Activated CD4-positive, alpha-beta T cell treated with anti-CD3 and anti-CD28 coated beads, Interleukin-2, amount 10 ng/mL, durations not matched to agents 24 days and 14 days (primary cell): ENCODE measurements at regions of chr19 and their contacts with region 1.

Region 1: DNA sequence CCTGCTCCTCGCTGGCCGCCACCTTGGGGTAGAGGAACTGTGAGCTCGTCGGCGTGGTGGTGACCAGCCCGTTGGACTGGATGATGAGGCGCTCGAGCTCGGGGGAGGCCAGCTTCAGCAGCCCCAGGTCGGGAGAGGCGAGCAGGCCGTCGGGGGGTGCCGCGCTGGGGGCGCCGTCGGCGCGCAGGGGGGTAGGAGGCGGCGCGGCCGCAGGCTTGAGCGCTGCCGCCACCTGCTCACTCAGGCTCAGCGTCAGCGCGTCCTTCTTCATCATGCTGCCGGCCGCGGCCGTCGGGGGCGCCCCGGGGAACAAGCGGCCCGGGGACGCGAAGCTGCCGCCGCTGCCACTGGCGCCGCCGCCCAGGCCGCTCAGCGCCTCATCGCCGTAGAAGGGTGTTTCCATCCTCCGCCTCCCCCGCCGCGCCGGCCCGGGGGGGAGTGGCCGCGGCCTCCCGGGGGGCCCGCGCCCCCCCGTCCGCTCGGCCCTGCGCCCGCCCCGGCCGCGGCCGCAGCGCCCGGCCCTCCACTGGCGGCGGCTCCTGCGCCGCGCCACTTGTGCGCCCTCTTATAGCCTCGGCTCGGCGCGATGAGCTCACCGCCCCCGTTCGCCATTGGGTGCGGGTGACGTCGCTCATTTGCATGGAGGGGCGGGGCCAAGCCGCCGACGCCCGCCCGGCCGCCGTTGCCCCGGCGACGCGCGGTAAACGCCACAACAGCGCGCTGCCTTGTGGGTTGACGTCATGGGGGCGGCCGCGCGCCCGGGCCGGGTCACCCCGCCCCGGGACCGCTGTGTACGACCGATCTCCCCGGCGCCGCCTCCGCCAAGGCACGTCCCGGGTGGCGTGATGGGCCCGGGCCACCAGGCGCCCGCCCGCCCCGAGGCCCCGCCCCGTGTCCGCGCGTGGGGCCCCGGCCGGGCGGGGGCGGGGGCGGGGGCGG is at the start of gene JUND:
- DNase-seq: peak; percentile 99
- H3K4me3 Mint-ChIP-seq: peak within 1 kb of the TSS; percentile 99
- H3K27ac Mint-ChIP-seq: peak within 1 kb of the TSS; percentile 98
- H3K4me1 Mint-ChIP-seq: peaks cover 46% of the 10 kb centered on the region
- H3K27me3 Mint-ChIP-seq: peaks cover 1% of the 10 kb centered on the region
- total RNA-seq, gene JUND: 382 and 413 TPM in 2 replicates

Region 2: DNA sequence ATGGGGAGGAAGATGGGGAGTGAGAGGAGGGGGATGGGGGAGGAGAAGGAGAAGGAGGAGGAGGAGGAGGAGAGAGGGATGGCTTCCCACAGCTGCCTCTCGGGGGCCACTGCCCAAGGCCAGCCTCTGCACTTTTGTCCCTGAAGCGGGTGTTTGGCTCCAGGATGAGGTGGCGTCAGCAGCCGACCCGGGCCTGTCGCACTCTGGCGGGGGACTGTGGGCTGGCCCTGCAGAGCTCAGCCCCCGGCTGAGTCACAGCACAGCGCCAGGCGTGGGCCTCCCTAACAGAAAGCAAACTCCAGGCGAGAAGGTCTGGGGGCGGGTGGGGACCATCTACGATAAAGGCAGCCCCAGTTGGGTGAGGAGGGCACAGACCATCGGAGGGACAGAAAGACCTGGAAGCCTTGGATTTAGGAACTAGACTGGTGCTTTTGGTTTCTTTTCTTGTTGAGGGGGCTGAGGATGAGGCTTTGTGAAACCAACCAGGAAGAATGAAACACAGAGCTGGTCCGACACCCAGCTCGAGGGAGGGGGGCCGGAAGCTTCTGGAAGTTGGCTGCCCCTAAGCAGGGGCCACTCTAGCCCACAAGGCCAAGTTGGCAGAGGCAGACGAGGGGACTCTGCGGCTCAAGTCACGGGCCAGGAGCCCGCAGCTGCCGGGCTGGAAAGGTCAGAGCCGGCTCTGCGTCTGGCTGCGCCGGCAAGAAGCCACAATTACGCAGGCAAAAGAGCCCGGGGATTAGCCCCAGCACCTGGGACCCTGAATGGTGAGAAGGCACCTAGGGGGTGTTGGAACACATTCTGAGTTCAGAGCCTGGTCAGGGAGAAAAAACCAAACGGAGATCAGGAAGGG is 23.3 kb after region 1 on chr19:
- intact Hi-C with region 1: loop called (anchors 1 kb)
- DNase-seq: peak; percentile 94
- H3K4me3 Mint-ChIP-seq: peak overlapping the region; percentile 94
- H3K27ac Mint-ChIP-seq: peak overlapping the region; percentile 98
- H3K4me1 Mint-ChIP-seq: peaks cover 43% of the 10 kb centered on the region
- H3K27me3 Mint-ChIP-seq: no peaks in the 10 kb centered on the region

Region 3: DNA sequence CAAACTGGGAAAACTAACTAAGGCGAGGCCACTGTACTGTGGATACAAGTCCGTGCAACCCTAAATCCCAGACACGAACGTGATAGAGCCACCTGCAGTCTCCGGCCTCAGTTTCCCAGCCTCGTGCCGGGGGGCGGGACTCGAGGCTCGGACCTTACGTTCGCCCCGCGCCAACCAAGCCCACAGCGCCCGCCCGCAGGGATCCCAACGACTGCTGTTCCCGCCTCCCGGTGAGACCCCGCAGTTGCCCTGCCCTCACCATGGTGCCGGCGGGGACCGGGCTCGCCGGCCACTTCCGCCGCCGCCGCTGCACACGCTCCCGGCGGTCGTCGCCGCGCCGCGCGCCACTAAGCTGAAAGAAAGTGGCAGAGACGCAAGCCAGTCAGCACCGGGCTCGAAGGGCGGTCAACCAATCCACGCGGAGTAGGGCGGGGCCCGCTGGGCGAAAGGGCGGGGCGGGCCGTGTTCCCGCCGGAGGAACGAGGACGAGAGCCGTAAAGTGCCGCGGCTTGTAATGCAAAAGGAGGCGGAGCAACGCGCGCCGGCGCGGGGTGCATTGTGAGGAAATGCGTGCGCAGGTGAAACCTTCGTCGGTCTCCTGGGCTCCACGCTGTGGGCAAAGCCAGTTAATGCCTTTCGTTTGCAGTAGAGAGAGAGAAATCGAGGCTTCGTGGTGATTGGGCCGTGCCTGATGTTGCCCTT is 41.6 kb after region 1 on chr19 and contains the start of gene LSM4:
- intact Hi-C with region 1: loop called (anchors 1 kb)
- DNase-seq: peak; percentile 100
- H3K4me3 Mint-ChIP-seq: peak within 1 kb of the TSS; percentile 96
- H3K27ac Mint-ChIP-seq: peak within 1 kb of the TSS; percentile 95
- H3K4me1 Mint-ChIP-seq: peaks cover 48% of the 10 kb centered on the region
- H3K27me3 Mint-ChIP-seq: no peaks in the 10 kb centered on the region
- total RNA-seq, gene LSM4: 217 and 225 TPM in 2 replicates

Region 4: DNA sequence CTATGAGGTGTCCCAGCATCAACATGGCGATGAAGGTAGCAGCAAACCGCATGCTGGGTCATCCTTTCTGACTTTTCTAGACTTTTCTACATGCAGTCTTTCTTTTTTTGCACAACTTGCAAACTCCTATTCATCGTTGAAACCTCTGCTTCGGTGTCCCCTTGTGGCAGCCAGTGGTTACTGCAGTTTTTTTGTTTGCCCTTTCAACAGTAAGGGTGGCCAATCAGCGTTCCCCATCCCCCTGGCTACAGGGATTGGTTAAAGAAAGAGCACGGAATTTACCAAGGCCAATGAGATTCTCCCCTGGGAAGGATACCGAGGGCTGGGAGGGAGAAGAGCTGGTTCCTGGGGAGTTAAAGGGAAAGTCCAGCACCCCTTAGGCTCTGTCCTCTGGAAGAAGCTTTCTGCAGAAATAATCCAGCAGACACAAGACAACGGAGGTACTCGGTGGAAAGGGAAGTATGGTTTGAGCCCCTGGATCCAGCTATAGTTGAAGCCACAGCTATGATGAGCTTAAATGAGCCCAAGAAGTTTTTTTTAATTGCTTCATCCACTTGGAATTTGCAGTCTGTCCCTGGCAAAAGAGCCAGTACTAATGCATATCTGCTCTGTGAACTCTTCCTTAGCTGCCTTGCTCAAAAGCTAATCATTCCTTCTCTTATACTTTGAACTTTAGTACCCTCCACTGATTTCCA is 47.1 kb after region 1 on chr19:
- intact Hi-C with region 1: loop called (anchors 1 kb)
- DNase-seq: peak; percentile 96
- H3K4me3 Mint-ChIP-seq: peak overlapping the region; percentile 70
- H3K27ac Mint-ChIP-seq: peak overlapping the region; percentile 52
- H3K4me1 Mint-ChIP-seq: peaks cover 17% of the 10 kb centered on the region
- H3K27me3 Mint-ChIP-seq: no peaks in the 10 kb centered on the region